HEK293 (cell line): ENCODE measurements at regions of chr7 and their contacts with region 1.

Region 1: DNA sequence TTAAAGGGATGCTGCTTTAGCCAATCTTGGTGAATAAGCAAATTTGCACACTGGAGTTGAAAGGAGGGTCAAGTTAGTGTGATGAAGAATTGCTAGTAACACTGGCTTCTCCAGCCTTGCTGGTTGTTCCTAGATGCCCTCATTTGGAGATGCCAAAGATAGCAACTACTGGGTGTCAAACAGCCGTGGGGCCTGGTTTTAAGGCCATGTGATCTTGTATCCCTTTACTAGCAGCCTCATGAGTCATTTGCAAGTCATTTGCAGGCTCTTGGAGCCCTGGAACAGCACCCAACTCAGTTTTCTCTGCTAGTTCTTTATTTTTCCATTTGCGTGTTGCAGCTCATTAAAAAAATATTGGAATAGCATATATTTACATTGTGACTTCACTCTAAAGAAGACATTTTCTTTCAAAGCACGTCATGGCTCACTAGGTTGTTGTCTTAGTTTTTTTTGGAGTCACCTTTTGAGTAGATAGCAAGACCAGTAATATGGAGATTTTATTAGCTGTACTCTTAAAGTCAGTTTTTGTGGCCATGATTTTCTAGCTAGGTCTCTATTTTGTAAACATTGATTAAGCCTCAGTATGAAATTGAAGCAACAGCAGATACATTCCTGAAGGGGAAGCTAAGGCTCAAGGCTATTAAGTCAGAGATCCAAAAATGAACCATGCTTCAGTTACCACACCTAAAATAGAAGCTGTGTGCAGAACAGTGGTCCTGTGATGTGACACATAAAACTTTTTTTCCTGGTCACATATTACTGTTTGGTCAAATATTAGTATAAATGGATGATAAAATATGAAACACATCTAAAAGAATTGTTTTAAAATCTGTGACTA is 1.3 kb downstream of the LSMEM1 start:
- H3K4me3 ChIP-seq: no peak overlapping the region
- H3K27ac ChIP-seq: no peak overlapping the region
- H3K4me1 ChIP-seq: peaks cover 5% of the 10 kb centered on the region
- CTCF ChIP-seq: no peak

Region 2: DNA sequence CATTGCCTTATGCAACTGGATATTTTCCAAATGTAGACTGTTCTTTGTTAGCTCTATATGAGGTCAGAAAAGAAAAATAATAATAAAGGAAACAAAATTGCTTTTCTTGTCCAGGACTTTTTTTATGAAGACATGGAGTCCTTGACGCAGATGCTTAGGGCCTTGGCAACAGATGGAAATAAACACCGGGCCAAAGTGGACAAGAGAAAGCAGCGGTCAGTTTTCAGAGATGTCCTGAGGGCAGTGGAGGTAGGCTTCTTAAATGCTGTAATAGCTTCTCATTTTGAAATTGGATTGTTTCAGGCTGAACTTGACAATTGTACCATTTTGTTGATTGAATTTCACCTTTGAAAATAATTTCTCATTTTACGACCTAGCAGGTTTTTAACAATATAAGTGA is 14.2 kb before region 1 on chr7:
- CTCF ChIA-PET with region 1: interaction called, 12 read pairs
- POLR2A ChIA-PET with region 1: no interaction called
- H3K4me3 ChIP-seq: no peak overlapping the region
- H3K27ac ChIP-seq: no peak overlapping the region
- H3K4me1 ChIP-seq: no peaks in the 10 kb centered on the region
- CTCF ChIP-seq: no peak